ENCODE measurements at regions of chr17 and their contacts with region 1.

Region 1: DNA sequence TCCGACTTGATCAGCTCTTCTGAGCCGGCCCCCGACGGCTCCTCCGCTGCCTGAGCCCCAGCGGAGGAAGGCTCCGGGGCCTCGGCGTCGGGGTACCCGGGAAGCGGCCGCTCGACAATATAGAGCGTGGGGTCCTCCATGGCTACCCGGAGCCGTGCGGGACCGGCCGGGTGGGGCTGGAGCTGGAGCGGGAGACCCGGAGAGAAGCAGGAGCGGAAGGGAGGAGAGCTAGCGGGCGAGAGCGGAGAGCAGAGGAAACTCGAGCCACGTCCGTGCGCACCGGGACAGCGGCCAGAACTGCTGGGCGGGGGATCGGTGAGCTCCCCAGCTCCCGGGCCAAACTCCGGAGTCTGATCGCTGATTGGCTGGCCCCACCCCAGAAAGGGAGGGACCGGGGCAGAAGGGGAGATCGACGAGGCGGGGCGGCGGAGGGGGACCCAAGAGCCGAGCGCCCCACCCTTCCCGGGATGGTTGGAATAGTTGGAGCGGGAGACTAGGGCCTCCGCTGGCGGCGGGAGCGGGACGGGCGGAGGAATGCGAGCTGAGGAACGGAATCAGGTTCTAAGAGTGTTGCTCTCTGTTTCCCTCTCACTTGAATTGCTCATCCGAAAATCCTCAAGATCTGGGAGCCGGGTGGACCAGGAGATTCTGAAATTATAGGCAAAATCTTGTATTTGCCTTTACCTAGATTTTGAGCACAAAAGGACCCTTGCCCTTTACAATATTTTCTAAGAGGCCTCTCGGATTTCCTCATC is at the start of gene CAVIN1:
- DNase-seq: peak; percentile 76

Region 2: DNA sequence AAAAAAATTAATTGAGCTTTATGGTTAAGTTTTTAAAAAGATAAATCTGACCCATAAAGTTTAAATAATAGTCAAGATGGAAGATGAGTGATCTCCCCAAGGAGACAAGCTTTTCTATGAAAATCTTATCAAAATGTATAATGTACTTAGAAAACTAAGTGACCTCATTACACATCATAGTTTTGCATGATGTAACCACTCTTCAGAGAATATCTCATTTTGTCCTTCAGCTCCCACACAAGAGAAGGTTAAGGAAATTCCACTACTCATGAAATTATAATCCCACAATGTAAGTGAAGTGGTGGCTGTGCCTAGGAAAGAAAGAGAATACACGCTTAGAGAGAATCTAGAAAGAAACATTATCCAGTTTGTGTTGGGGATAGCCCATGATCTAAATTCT is 49.2 kb before region 1 on chr17:
- CTCF ChIA-PET with region 1: no interaction called
- POLR2A ChIA-PET with region 1: no interaction called
- DNase-seq: no peak

Region 3: DNA sequence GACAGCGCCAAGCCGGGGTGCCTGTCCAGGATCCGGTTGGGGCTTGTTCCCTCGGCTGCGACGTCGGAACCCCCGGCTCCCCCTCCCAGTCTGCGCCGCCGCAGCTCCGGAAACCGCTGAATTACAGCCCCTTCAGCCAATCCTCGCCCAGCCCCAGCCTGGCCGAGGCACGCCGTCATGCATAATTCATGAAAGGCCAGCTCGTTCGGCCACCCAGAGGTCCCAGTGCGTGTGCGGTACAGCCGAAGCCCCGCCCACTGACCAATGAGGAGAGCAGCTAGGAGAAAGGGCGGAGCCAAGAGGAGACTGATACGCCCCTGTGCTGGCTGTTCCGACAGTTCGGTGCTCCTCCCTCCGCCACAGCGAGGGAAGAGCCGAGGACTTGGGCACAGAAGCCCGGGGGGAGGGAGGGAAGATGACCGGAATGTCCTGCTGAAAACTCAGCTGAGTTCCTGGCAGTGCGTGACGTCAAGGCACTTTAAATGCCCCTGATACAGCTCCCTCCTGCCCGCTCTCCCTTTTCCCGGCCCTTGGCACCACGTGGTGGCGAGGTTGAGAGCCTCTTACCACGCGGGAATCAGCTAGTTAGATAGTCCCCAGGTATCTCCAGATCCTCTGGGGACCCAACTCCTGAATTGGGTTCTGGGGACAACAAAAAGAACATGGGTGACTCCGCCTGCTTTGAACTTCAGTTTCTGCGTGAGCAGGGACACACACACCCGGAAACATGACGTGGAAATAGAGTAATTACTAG is 34.6 kb before region 1 on chr17 and contains the start of gene STAT3:
- CTCF ChIA-PET with region 1: no interaction called
- POLR2A ChIA-PET with region 1: interaction called, 14 read pairs
- DNase-seq: peak; percentile 100

Region 4: DNA sequence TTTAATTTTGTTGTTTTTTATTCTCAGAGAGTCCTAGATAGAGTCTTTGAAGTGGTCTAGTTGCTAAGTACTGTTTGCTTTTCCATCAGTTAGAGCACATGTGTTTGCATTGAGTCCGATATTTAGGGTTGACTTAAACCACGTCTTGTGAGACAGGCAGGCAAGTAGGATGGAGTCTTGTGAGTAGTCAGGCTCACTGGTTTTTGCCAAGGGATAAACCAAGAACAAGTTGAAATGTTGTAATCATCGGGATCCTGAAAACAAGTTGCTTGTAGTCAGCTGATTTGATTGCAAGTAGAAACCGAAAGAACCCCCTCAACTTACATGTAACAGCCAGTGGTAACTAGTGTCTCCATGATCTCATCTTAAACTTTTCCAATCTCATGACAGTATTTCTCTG is 52.7 kb after region 1 on chr17:
- CTCF ChIA-PET with region 1: no interaction called
- POLR2A ChIA-PET with region 1: no interaction called
- DNase-seq: no peak

Measured in HEK293T (cell line).